Activated T-helper 2 cell treated with anti-CD3 and anti-CD28 coated beads, Interferon-gamma antibody, Interleukin-2, Interleukin-4, amounts not matched to agents 10 μg/mL and 5 μg/mL and 100 μg/mL, durations not matched to agents 14 hours and 24 hours and 36 hours (primary cell): ENCODE measurements at regions of chr1 and their contacts with region 1.

Region 1: GRCh38 chr1:151059078-151059907 is at the start of gene CDC42SE1:
- DNase-seq: peak; percentile 82
- H3K4me3 Mint-ChIP-seq: peak within 1 kb of the TSS; percentile 90
- H3K27ac Mint-ChIP-seq: peak within 1 kb of the TSS; percentile 96
- H3K4me1 Mint-ChIP-seq: peaks cover 63% of the 10 kb centered on the region
- H3K27me3 Mint-ChIP-seq: no peaks in the 10 kb centered on the region
- total RNA-seq, gene CDC42SE1: 176 TPM in 2 replicates

Region 2: GRCh38 chr1:150118716-150119115 is 940.6 kb before region 1 on chr1:
- intact Hi-C with region 1: loop called (anchors 10 kb)
- DNase-seq: no peak
- H3K4me3 Mint-ChIP-seq: no peak overlapping the region
- H3K27ac Mint-ChIP-seq: no peak overlapping the region
- H3K4me1 Mint-ChIP-seq: peaks cover 5% of the 10 kb centered on the region
- H3K27me3 Mint-ChIP-seq: no peaks in the 10 kb centered on the region

Region 3: GRCh38 chr1:151008190-151008860 is 51.0 kb before region 1 on chr1 and contains the start of gene PRUNE1:
- intact Hi-C with region 1: loop called (anchors 1 kb)
- DNase-seq: peak; percentile 92
- H3K4me3 Mint-ChIP-seq: peak within 1 kb of the TSS; percentile 98
- H3K27ac Mint-ChIP-seq: peak within 1 kb of the TSS; percentile 96
- H3K4me1 Mint-ChIP-seq: peaks cover 51% of the 10 kb centered on the region
- H3K27me3 Mint-ChIP-seq: no peaks in the 10 kb centered on the region
- total RNA-seq, gene PRUNE1: 15.1 and 15.5 TPM in 2 replicates

Region 4: GRCh38 chr1:151024540-151025146 is 34.6 kb before region 1 on chr1:
- intact Hi-C with region 1: loop called (anchors 2 kb)
- DNase-seq: peak; percentile 72
- H3K4me3 Mint-ChIP-seq: no peak overlapping the region
- H3K27ac Mint-ChIP-seq: no peak overlapping the region
- H3K4me1 Mint-ChIP-seq: peaks cover 5% of the 10 kb centered on the region
- H3K27me3 Mint-ChIP-seq: no peaks in the 10 kb centered on the region

Region 5: DNA sequence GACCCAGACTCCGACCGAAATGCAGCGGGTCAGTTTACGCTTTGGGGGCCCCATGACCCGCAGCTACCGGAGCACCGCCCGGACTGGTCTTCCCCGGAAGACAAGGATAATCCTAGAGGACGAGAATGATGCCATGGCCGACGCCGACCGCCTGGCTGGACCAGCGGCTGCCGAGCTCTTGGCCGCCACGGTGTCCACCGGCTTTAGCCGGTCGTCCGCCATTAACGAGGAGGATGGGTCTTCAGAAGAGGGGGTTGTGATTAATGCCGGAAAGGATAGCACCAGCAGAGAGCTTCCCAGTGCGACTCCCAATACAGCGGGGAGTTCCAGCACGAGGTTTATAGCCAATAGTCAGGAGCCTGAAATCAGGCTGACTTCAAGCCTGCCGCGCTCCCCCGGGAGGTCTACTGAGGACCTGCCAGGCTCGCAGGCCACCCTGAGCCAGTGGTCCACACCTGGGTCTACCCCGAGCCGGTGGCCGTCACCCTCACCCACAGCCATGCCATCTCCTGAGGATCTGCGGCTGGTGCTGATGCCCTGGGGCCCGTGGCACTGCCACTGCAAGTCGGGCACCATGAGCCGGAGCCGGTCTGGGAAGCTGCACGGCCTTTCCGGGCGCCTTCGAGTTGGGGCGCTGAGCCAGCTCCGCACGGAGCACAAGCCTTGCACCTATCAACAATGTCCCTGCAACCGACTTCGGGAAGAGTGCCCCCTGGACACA is 11.2 kb before region 1 on chr1:
- intact Hi-C with region 1: loop called (anchors 1 kb)
- DNase-seq: peak; percentile 52
- H3K4me3 Mint-ChIP-seq: peak overlapping the region; percentile 86
- H3K27ac Mint-ChIP-seq: peak overlapping the region; percentile 77
- H3K4me1 Mint-ChIP-seq: peaks cover 14% of the 10 kb centered on the region
- H3K27me3 Mint-ChIP-seq: no peaks in the 10 kb centered on the region

Region 6: GRCh38 chr1:151070474-151071276 is 11.4 kb after region 1 on chr1 and contains the start of gene GABPB2:
- intact Hi-C with region 1: loop called (anchors 1 kb)
- DNase-seq: peak; percentile 82
- H3K4me3 Mint-ChIP-seq: peak within 1 kb of the TSS; percentile 100
- H3K27ac Mint-ChIP-seq: peak within 1 kb of the TSS; percentile 100
- H3K4me1 Mint-ChIP-seq: peaks cover 12% of the 10 kb centered on the region
- H3K27me3 Mint-ChIP-seq: no peaks in the 10 kb centered on the region
- total RNA-seq, gene GABPB2: 14.4 and 15.9 TPM in 2 replicates

Region 7: GRCh38 chr1:151156515-151156819 is 97.2 kb after region 1 on chr1 and contains the start of gene TNFAIP8L2:
- intact Hi-C with region 1: loop called (anchors 2 kb)
- DNase-seq: peak; percentile 71
- H3K4me3 Mint-ChIP-seq: peak within 1 kb of the TSS; percentile 99
- H3K27ac Mint-ChIP-seq: peak within 1 kb of the TSS; percentile 99
- H3K4me1 Mint-ChIP-seq: peaks cover 37% of the 10 kb centered on the region
- H3K27me3 Mint-ChIP-seq: no peaks in the 10 kb centered on the region
- total RNA-seq, gene TNFAIP8L2: 24.3 and 28.7 TPM in 2 replicates